ENCODE measurements at regions of chr1 and their contacts with region 1.

Region 1: GRCh38 chr1:119613769-119614720 is 34.0 kb downstream of the ZNF697 start:
- DNase-seq: peak; percentile 90
- H3K4me3 ChIP-seq: no peak overlapping the region
- H3K27ac ChIP-seq: no peak overlapping the region
- H3K4me1 ChIP-seq: no peaks in the 10 kb centered on the region
- H3K27me3 ChIP-seq: no peaks in the 10 kb centered on the region
- CTCF ChIP-seq: peak; percentile 63

Region 2: DNA sequence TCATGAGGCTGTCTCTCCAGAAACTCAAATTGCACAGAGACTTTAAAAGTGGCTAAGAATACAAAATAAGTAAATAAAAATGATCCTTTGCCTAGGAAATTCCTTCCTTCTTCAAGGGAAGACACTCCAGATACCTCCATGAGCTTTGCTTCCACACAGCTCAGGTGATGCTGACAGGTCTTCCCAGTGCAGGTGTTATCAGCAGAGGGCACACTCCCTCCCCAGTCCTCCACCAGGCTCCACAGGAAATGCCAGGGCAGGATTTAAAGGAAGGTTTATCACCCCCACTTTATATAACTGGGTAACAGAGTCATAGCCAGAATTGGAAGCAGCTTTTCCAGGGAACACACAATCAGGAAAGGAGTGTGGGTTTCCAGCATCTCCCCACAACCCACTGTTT is 193.4 kb before region 1 on chr1:
- intact Hi-C with region 1: no loop called
- DNase-seq: no peak
- H3K4me3 ChIP-seq: no peak overlapping the region
- H3K27ac ChIP-seq: no peak overlapping the region
- H3K4me1 ChIP-seq: no peaks in the 10 kb centered on the region
- H3K27me3 ChIP-seq: no peaks in the 10 kb centered on the region
- CTCF ChIP-seq: no peak

Region 3: GRCh38 chr1:119544165-119544762 is 69.8 kb before region 1 on chr1:
- intact Hi-C with region 1: no loop called
- DNase-seq: no peak
- H3K4me3 ChIP-seq: no peak overlapping the region
- H3K27ac ChIP-seq: no peak overlapping the region
- H3K4me1 ChIP-seq: no peaks in the 10 kb centered on the region
- H3K27me3 ChIP-seq: no peaks in the 10 kb centered on the region
- CTCF ChIP-seq: no peak

Region 4: GRCh38 chr1:119662034-119662437 is 48.0 kb after region 1 on chr1:
- intact Hi-C with region 1: loop called (anchors 5 kb)
- DNase-seq: peak; percentile 43
- H3K4me3 ChIP-seq: no peak overlapping the region
- H3K27ac ChIP-seq: peak overlapping the region; percentile 56
- H3K4me1 ChIP-seq: peaks cover 8% of the 10 kb centered on the region
- H3K27me3 ChIP-seq: no peaks in the 10 kb centered on the region
- CTCF ChIP-seq: no peak

Region 5: DNA sequence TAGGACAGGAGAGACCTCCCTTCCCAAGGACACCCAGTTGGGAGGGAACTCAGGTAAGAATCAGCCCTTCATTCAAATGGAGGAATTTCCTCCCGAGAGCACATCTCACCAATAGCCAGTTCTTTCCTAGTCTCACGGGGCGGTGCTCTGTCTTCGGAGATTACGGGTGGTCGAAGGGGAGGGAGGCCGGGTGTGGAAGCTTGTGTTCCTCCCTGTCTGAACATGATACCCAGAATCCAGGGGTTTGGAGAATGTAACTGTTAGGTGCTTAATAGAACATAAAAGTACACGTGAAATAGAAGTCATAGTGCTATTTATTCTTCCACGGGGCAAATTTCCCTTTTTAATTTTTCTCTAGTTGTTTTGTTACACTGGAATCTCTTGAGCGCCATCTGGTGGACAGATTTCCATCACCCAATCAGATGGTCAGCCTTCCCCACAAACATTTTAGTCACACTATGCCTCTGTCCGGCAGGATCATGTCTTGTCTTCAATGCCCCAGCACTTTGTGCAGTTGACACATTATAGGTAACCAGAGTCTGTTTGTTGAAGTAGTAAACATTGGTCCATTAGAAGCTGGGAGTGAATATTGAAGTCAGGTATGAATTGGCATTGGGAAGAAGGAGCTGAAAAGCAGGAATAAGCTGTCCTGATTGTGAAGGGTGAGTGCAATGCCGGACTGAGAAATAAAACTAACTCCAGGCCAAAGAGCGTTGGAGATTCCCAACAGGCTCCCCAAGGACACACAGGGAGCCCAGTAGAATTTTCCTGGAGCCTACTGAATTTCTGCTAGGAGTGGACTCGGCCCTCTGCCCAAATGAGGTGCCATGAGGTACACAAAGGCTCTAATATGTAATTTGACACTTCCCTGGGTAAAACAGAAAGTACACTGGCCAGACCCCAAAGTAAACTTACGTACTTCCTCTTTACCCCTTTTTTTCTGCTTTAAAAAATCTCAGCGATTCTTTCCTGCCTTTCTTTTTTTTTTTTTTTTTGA is 61.6 kb after region 1 on chr1:
- intact Hi-C with region 1: loop called (anchors 5 kb)
- DNase-seq: peak; percentile 92
- H3K4me3 ChIP-seq: peak overlapping the region; percentile 19
- H3K27ac ChIP-seq: no peak overlapping the region
- H3K4me1 ChIP-seq: no peaks in the 10 kb centered on the region
- H3K27me3 ChIP-seq: no peaks in the 10 kb centered on the region
- CTCF ChIP-seq: peak; percentile 74

Measured in colonic mucosa (tissue), 4 donors.